Endothelial cell of umbilical vein (primary cell): ENCODE measurements at regions of chr4 and their contacts with region 1.

Region 1: GRCh38 chr4:161642708-161643107 is 521.1 kb downstream of the FSTL5 start:
- DNase-seq: peak; percentile 67
- H3K4me3 ChIP-seq: peak overlapping the region in 1 of 3 experiments; percentile 54
- H3K27ac ChIP-seq: no peak overlapping the region
- H3K4me1 ChIP-seq: peaks cover 8% of the 10 kb centered on the region
- H3K27me3 ChIP-seq: no peaks in the 10 kb centered on the region
- CTCF ChIP-seq: peak in 1 of 2 donors; percentile 10
- POLR2A ChIP-seq: no peak

Region 2: GRCh38 chr4:161949946-161950725 is 307.4 kb after region 1 on chr4:
- CTCF ChIA-PET with region 1: interaction called, 12 read pairs
- POLR2A ChIA-PET with region 1: no interaction called
- dilution Hi-C with region 1: no loop called
- intact Hi-C with region 1: no loop called
- DNase-seq: no peak
- H3K4me3 ChIP-seq: no peak overlapping the region
- H3K27ac ChIP-seq: no peak overlapping the region
- H3K4me1 ChIP-seq: no peaks in the 10 kb centered on the region
- H3K27me3 ChIP-seq: no peaks in the 10 kb centered on the region
- CTCF ChIP-seq: no peak
- POLR2A ChIP-seq: no peak